ENCODE measurements at regions of chr11 and their contacts with region 1.

Region 1: DNA sequence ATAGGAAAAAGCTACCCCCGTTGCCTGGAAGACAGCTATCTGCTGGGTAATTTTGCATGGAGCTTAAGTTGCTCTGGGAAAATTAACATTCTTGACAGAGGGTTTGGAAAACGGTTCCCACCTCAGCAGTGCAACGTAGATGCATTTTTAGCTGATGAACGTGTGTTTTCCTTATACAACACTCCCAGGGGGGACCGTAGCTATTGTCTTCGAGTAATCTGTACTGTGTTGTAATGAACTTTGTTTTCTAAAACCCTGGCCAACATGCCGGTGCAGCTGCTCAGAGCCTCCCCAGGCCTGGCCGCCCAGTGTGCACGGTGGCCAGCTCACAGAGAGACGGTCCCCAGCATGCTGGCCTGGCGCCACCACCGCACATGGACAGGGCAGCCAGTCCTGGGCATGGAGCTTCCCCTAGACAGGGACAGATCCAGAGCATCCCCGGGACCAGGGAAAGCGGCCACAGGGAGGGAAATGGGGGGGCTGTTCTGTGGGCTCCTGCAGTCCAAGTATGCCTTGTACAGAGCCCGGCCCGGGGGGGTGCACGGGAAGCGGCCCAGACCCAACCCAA is 2.2 kb downstream of the TNNT3 start:
- DNase-seq: no peak
- H3K4me3 Mint-ChIP-seq: no peak overlapping the region
- H3K27ac Mint-ChIP-seq: no peak overlapping the region
- H3K4me1 Mint-ChIP-seq: peaks cover 4% of the 10 kb centered on the region
- H3K27me3 Mint-ChIP-seq: no peaks in the 10 kb centered on the region

Region 2: DNA sequence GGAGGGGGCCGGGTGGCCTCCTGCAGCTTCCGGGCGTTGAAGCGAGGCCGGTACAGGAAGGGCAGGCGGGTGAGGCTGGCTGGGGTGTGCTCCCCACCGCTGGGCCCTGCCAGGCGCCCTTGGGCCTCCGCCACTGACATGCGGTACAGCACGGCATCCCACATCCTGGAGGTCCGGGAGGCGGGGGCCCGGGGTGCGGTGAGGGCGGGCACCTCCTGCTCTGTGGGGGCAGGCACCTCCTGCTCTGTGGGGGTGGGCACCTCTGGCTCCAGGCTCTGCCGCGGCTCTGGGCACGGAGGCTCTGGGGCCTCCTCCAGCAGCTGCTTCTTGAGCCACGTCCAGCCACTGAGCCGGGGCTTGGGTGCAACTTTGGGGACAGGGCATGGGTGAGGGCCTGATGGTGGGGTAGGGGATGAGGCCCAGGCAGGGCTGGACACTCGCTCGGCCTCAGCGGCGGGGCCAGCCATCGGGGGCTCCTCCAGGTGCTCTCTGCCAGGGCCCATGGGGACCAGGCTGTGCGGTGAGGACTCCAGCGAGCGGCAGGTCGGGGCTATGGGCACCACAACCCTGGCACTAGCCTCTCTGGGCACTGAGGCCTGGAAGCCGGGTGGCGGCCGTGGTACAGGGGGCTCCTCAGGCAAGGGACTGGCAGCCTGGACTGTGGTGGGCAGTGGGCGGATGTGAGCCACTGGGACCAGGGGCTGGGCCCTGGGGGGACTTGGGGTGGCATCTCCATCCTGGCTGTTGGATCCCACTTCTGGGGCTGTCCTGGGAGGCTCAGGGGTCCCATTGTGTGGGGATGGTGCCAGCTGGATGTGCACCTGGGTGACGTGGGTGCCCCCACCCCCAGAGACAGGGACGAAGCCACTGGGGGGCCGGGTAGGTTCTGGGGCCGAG is 32.2 kb before region 1 on chr11:
- CTCF ChIA-PET with region 1: interaction called, 18 read pairs
- POLR2A ChIA-PET with region 1: no interaction called
- DNase-seq: peak; percentile 87
- H3K4me3 Mint-ChIP-seq: peak overlapping the region; percentile 76
- H3K27ac Mint-ChIP-seq: peak overlapping the region; percentile 93
- H3K4me1 Mint-ChIP-seq: peaks cover 56% of the 10 kb centered on the region
- H3K27me3 Mint-ChIP-seq: no peaks in the 10 kb centered on the region

Region 3: DNA sequence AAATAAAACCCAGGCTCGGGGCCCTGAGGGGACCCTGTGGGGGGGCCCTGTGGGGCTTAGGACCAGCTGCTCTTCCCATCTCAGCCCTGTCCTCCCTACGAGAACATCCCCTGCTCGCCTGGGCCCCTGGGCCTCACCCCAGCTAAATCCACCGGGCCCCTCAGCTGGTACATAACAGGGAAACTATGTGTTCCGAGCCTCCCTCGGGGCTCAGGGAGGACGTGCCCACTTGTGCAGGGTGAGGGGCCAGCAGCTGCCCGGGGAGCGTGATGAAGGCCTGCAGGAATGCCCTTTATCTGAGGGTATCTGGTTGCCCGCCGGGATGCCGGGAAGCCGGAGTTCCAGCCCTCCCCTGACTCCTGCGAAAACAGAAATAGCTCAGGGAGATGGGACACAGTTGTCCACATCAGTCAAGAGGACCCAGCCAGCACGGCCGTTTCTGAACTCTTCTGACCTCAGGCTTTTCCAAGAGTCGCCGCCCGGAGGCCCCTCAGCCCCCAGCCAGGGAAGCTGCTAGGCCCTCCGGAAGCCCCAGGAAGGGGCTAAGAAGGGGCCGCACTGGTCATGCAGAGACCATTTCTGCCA is 46.1 kb after region 1 on chr11:
- CTCF ChIA-PET with region 1: no interaction called
- POLR2A ChIA-PET with region 1: no interaction called
- DNase-seq: no peak
- H3K4me3 Mint-ChIP-seq: no peak overlapping the region
- H3K27ac Mint-ChIP-seq: no peak overlapping the region
- H3K4me1 Mint-ChIP-seq: no peaks in the 10 kb centered on the region
- H3K27me3 Mint-ChIP-seq: no peaks in the 10 kb centered on the region

Measured in activated CD4-positive, alpha-beta T cell treated with anti-CD3 and anti-CD28 coated beads, Interleukin-2, amount 10 ng/mL, durations not matched to agents 7 days and 5 days (primary cell).